ENCODE measurements at regions of chr19 and their contacts with region 1.

Region 1: GRCh38 chr19:51338563-51339312 is 3.2 kb downstream of the VSIG10L start:
- DNase-seq: peak; percentile 91
- H3K4me3 ChIP-seq: peak overlapping the region; percentile 75
- H3K27ac ChIP-seq: peak overlapping the region; percentile 73
- H3K4me1 ChIP-seq: peaks cover 4% of the 10 kb centered on the region
- H3K27me3 ChIP-seq: no peaks in the 10 kb centered on the region
- CTCF ChIP-seq: peak; percentile 87

Region 2: GRCh38 chr19:51407511-51408131 is 68.9 kb after region 1 on chr19:
- intact Hi-C with region 1: loop called (anchors 5 kb)
- DNase-seq: no peak
- H3K4me3 ChIP-seq: no peak overlapping the region
- H3K27ac ChIP-seq: no peak overlapping the region
- H3K4me1 ChIP-seq: no peaks in the 10 kb centered on the region
- H3K27me3 ChIP-seq: no peaks in the 10 kb centered on the region
- CTCF ChIP-seq: peak; percentile 43

Region 3: DNA sequence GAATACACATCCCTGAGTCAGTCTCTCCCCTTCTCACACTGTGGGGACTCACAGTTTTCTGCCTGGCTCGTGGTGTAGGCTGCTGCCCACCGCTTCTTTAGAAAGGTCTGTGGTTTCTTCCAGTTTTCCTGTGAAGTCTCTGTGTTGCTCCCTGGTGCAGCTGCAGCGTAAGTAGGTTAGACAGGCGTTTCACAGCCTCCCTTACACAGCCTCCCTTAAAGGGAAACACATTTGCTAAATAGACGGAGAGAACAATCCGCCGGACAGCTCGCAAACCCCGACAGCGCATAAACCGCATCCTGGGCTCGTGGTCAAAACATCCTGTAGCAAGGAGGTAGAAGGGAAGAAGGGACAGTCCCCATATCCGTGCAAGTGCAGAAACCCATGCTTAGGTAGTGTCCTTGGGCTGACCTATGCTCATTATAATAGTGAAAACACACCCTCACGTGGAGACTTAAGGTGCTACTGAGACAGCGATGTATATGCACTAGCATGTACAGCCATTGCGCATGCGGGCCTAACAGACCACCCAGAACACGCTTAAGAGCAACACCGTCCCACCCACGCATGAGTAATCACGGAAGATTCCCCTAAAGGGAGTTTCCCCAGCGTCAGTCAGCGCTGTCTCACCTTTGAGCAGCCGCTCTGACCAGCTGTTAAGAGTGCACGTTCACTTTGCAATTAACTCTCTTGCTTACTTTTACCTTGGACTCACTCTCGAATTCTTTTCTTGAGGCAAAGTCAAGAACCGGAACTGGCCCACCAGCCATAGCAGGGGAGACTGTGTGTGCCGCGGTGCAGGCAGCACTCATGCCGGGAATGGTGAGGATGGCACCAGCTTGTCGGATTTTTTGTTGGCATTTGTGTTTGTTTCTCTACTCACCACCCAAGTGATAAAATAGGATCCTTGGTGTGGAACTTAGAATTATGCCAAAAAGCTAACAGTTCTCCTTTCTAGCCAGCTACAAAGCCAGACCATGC is 103.0 kb after region 1 on chr19:
- intact Hi-C with region 1: loop called (anchors 1 kb)
- DNase-seq: peak; percentile 44
- H3K4me3 ChIP-seq: no peak overlapping the region
- H3K27ac ChIP-seq: no peak overlapping the region
- H3K4me1 ChIP-seq: no peaks in the 10 kb centered on the region
- H3K27me3 ChIP-seq: no peaks in the 10 kb centered on the region
- CTCF ChIP-seq: no peak

Measured in colonic mucosa (tissue), 4 donors.